ENCODE measurements at regions of chr15 and their contacts with region 1.

Region 1: DNA sequence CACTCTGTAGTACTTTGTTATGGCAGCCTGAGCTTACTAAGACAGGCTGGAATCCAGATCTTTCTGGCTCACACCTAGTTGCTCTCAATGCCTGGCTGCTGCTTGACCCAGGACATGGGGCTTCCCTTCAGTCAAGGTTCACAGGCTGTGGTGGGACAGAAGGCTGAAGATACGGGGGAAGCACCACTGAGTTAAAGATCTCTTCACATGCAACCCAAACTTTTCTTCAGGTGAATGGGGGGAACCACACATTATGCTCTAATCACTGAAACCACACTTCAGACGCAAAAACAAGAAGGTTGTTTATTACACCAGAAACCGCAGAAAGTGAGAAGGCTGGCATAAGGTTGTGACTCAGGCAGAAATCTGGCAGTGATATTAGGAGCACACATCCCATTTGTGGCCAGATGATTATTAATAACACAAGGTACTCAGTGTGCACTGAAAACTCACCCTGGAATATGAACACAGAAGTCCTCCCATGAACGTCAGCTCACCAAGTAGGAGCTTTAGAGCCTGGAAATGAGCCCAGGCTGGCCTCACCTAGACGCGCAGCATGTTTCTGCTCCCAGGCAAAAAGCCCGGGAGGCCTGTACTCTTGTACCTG is 230.5 kb upstream of the CHRNA7 start:
- DNase-seq: no peak
- ATAC-seq: no peak
- H3K4me3 ChIP-seq: no peak overlapping the region
- H3K27ac ChIP-seq: no peak overlapping the region
- H3K4me1 ChIP-seq: no peaks in the 10 kb centered on the region
- H3K27me3 ChIP-seq: no peaks in the 10 kb centered on the region
- CTCF ChIP-seq: no peak

Region 2: GRCh38 chr15:31857194-31857593 is 57.4 kb after region 1 on chr15:
- intact Hi-C with region 1: loop called in 1 of 2 experiments (anchors 10 kb)
- DNase-seq: no peak
- ATAC-seq: no peak
- H3K4me3 ChIP-seq: no peak overlapping the region
- H3K27ac ChIP-seq: no peak overlapping the region
- H3K4me1 ChIP-seq: no peaks in the 10 kb centered on the region
- H3K27me3 ChIP-seq: no peaks in the 10 kb centered on the region
- CTCF ChIP-seq: no peak